Endothelial cell of umbilical vein (primary cell): ENCODE measurements at regions of chr11 and their contacts with region 1.

Region 1: DNA sequence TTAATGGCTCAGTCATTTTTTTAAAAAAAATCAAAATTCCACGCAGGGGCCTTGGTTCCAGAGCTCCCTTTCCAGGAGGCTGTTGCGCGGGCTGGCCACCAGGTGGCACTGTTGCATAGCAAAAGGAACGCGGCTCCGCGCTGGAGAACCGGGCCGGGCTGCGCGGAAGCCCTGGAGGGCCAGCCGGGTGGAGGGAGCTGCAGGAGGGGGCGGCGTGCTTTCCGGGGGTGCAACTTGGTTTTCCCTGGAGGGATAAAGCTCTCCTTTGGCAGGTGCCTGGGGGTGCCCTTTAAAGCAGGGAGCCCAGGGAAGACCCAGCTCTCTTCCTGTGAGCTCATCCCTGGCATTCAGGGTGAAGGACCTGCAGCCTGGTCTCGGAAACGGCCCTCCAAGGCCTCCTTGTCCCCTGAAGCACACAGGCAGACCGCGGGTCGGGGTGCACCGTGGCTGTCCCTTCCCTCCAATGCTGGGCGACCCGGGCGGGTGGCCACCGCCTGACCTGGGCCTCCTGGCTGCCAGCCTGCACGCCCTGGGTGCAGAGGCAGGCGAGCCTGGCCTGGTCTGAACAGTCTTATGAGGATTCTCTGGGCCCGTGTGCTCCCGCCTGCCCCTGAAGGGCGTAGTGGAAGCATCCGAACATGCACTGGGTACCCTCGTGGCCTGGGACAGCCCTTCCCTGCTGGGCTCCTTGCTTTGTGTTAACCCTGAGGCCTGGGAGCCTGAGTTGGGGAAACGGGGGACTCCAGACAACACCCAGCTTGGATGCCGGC is 23.4 kb downstream of the KRTAP5-5 start:
- DNase-seq: peak; percentile 44
- H3K4me3 ChIP-seq: no peak overlapping the region
- H3K27ac ChIP-seq: no peak overlapping the region
- H3K4me1 ChIP-seq: peaks cover 2% of the 10 kb centered on the region
- H3K27me3 ChIP-seq: peaks cover 0 to 4% of the 10 kb centered on the region in 2 experiments
- CTCF ChIP-seq: peak; percentile 93
- POLR2A ChIP-seq: no peak

Region 2: DNA sequence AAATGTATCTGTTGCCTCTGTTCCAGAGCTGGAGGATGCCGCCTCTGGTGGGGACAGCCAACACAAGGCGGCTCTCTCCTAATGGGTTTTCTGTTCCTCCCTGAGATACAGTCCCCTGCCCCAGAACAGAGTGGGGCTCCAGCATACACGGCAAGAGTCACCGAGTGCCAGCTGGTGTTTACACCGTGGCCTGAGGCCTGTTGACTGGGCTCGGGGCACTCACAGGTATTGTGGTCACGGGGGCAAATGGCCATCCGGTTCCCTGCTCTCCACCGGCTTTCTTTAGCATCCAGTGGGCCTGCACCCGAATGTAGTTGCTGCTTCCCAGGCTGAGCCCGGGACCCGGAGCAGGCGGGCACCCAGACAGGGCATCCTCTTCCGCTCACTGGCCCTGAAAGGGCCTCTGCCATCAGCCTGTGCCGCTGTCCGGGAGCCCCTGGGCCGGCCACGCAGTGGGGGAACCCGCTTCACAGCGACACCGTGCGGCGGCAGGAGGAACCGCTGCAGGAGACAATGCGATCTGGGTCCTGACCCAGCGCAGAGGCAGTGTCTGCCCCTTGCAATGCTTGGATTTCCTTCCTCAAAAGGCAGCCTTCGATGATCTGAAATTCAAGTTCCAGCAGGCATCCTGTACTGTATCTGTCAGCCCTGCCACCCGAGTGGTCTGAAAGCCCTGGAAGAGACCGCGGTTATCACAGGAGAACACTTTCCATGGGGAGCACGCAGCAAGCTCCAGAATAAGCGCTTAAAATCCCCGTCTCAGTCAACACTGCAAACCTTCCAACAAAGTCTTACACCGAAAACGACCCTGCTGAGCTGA is 24.2 kb before region 1 on chr11:
- CTCF ChIA-PET with region 1: interaction called, 22 read pairs
- POLR2A ChIA-PET with region 1: no interaction called
- dilution Hi-C with region 1: no loop called
- intact Hi-C with region 1: no loop called
- DNase-seq: peak; percentile 34
- H3K4me3 ChIP-seq: no peak overlapping the region
- H3K27ac ChIP-seq: no peak overlapping the region
- H3K4me1 ChIP-seq: no peaks in the 10 kb centered on the region
- H3K27me3 ChIP-seq: peaks cover 0 to 8% of the 10 kb centered on the region in 2 experiments
- CTCF ChIP-seq: peak; percentile 95 to 97
- POLR2A ChIP-seq: no peak

Region 3: GRCh38 chr11:1694064-1694845 is 41.3 kb after region 1 on chr11:
- CTCF ChIA-PET with region 1: interaction called, 197 read pairs
- POLR2A ChIA-PET with region 1: no interaction called
- dilution Hi-C with region 1: no loop called
- intact Hi-C with region 1: loop called (anchors 1 kb)
- DNase-seq: peak; percentile 56
- H3K4me3 ChIP-seq: no peak overlapping the region
- H3K27ac ChIP-seq: no peak overlapping the region
- H3K4me1 ChIP-seq: peaks cover 16% of the 10 kb centered on the region
- H3K27me3 ChIP-seq: no peaks in the 10 kb centered on the region
- CTCF ChIP-seq: peak; percentile 94 to 98
- POLR2A ChIP-seq: no peak

Region 4: GRCh38 chr11:1832211-1832919 is 179.4 kb after region 1 on chr11:
- CTCF ChIA-PET with region 1: interaction called, 337 read pairs
- POLR2A ChIA-PET with region 1: no interaction called
- dilution Hi-C with region 1: no loop called
- intact Hi-C with region 1: loop called (anchors 1 kb)
- DNase-seq: no peak
- H3K4me3 ChIP-seq: no peak overlapping the region
- H3K27ac ChIP-seq: no peak overlapping the region
- H3K4me1 ChIP-seq: peaks cover 2% of the 10 kb centered on the region
- H3K27me3 ChIP-seq: no peaks in the 10 kb centered on the region
- CTCF ChIP-seq: peak; percentile 87 to 97
- POLR2A ChIP-seq: no peak

Region 5: DNA sequence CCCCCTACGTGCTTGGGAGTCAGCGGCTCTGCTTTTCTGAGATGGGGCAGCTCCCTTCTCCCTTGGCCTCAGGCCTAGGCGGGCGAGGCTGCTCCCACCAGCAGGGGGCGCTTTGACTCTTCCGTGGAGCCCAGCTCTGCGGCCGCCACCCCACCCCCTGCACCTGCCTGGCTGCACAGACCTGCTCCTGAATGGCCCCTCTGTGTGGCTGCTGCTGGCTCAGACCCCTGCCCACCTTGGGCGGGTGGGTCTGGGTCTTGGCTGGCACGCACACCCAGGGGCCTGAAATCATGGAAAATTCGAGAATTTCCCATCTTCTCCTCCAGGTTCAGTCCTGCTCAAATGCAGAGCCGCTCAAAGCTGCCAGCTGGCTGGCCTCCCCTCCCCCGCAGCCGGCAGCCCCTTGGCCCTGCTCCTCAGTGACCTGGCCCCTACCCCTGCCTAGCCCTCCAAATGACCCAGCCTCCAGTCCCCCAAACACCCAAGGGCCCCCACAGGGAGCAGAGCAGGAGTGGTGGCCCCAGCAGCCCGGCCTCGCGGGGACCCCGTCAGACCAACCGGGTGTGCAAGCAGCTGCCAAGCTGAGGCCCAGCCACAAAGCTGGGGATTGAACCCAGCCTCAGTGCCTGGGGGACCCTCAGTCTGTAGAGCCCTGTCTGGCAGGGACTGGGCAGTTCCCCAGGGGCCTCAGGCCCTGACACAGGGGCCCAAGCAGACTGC is 229.7 kb after region 1 on chr11:
- CTCF ChIA-PET with region 1: interaction called, 34 read pairs
- POLR2A ChIA-PET with region 1: no interaction called
- dilution Hi-C with region 1: no loop called
- intact Hi-C with region 1: no loop called
- DNase-seq: peak; percentile 60
- H3K4me3 ChIP-seq: no peak overlapping the region
- H3K27ac ChIP-seq: no peak overlapping the region
- H3K4me1 ChIP-seq: no peaks in the 10 kb centered on the region
- H3K27me3 ChIP-seq: no peaks in the 10 kb centered on the region
- CTCF ChIP-seq: peak; percentile 91 to 98
- POLR2A ChIP-seq: no peak

Region 6: DNA sequence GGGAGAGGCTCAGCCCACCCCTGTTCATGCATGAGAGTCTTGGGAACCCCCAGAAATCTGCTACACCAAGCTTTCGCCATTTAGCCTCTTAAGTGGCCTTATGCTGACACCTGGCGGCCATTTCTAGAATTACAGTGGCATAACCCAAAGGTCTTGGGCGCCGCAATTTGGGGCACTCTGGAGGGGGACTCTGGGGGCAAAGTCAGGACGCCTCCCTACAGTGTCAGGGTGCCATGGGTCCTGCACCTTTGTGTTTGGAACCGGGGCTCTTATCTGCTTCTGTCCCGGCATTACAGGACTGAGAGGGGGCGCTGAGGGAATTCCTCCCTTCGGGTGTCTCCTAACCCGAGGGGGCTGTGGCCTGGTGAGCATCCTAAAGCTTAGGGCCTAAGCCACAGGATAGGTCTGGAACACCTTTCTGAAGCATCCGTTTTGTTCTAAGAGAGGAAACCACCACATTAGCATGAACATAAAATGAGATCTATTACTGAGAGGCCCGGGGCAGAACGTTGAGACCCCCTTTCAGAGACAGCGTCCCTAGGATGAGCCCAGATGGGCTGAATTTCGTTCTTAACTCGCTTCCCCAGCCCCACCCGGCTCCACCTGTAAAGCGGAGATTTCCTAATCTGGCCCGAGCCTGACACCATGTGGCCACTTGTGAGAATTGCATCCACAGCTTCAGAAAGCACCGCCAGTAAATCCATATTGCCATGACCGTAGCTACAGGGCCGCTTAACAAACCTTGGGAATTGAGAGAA is 498.7 kb after region 1 on chr11:
- CTCF ChIA-PET with region 1: interaction called, 150 read pairs
- POLR2A ChIA-PET with region 1: no interaction called
- dilution Hi-C with region 1: no loop called
- intact Hi-C with region 1: no loop called
- DNase-seq: peak; percentile 74
- H3K4me3 ChIP-seq: no peak overlapping the region
- H3K27ac ChIP-seq: no peak overlapping the region
- H3K4me1 ChIP-seq: no peaks in the 10 kb centered on the region
- H3K27me3 ChIP-seq: peaks cover 13 to 16% of the 10 kb centered on the region in 2 experiments
- CTCF ChIP-seq: peak; percentile 59 to 73
- POLR2A ChIP-seq: no peak